Caco-2 (cell line): ENCODE measurements at regions of chr3 and their contacts with region 1.

Region 1: GRCh38 chr3:181210275-181210674 is 220.7 kb upstream of the DNAJC19 start:
- DNase-seq: no peak
- H3K4me3 ChIP-seq: no peak overlapping the region
- H3K4me3 Mint-ChIP-seq: no peak overlapping the region
- H3K27ac Mint-ChIP-seq: no peak overlapping the region
- H3K4me1 ChIP-seq: no peaks in the 10 kb centered on the region
- H3K4me1 Mint-ChIP-seq: no peaks in the 10 kb centered on the region
- H3K27me3 ChIP-seq: no peaks in the 10 kb centered on the region
- H3K27me3 Mint-ChIP-seq: peaks cover 5% of the 10 kb centered on the region
- CTCF ChIP-seq: peak in 1 of 2 experiments; percentile 38

Region 2: DNA sequence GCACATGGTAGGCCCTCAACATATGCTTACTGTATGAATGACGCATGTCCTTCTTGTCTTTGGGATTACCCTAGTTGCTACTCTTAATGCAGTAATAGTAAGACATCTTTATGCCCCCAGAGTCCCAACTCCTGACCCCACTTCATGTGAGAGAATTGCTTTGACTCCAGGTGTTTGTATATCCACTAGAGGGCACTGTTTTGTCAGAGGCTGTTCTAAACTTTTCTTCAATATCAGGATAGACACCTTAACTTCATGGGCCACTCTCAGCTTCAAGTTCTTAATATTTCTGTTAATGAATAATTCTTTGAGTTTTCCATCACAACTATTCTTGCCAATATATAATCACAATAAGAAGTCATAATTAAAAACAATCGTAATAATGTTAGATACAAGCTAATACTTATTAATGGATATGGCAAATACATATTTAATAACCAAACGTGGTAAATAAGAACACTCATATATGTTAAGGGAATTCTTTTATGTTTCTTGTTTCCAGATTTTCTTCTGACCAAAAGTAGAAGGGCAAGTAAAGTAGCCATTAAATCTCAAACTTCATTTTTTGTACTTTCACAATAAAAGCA is 116.5 kb after region 1 on chr3:
- CTCF ChIA-PET with region 1: interaction called, 7 read pairs
- POLR2A ChIA-PET with region 1: no interaction called
- intact Hi-C with region 1: loop called (anchors 1 kb)
- DNase-seq: peak in 1 of 2 experiments; percentile 32
- H3K4me3 ChIP-seq: no peak overlapping the region
- H3K4me3 Mint-ChIP-seq: no peak overlapping the region
- H3K27ac Mint-ChIP-seq: no peak overlapping the region
- H3K4me1 ChIP-seq: no peaks in the 10 kb centered on the region
- H3K4me1 Mint-ChIP-seq: no peaks in the 10 kb centered on the region
- H3K27me3 ChIP-seq: no peaks in the 10 kb centered on the region
- H3K27me3 Mint-ChIP-seq: peaks cover 31% of the 10 kb centered on the region
- CTCF ChIP-seq: peak; percentile 29 to 71

Region 3: DNA sequence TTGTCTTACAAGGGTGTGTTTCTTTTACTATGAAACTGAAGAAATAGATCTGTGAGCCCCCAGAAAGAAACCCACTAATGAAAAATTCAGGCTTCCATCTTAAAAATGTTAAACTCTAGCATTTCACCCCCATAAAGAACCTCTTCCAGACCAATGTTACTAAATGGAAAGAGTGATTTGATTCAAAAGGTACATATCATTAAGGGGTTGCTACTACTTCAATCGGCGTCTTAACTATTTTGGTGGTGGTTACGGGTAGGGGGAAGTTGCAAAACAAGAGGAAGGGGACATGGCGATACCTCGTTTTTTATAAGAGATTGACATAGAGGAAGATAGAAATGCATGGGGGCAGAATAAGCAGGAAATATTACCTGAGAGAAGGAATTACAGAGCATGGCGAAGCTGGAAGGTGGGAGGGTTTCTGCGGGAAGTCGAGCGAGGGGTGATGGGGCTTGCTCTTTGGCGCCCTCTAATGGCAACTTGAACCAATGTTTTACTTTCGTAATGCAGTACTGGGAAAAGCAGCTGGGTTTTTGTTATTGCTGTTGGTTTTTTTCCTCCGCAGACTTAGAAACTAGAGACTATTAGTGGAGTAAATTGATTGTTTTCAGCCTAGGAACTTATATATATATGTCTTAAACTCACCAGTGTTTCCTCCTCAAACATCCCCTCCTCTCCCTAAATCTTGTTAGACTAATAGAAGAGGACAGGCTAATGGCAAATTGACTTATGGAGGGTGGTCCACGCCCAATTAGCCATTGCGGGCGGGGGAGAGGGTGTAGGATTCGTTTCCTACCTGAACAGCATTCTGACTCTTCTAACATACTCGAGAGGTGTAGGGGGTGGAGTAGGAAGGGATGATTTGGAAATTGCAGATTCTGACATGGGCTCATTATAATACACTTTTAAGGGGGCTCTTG is 490.2 kb after region 1 on chr3:
- CTCF ChIA-PET with region 1: interaction called, 6 read pairs
- POLR2A ChIA-PET with region 1: no interaction called
- intact Hi-C with region 1: loop called (anchors 1 kb)
- DNase-seq: peak; percentile 63 to 79
- H3K4me3 ChIP-seq: no peak overlapping the region
- H3K4me3 Mint-ChIP-seq: peak overlapping the region; percentile 73
- H3K27ac Mint-ChIP-seq: no peak overlapping the region
- H3K4me1 ChIP-seq: no peaks in the 10 kb centered on the region
- H3K4me1 Mint-ChIP-seq: peaks cover 10% of the 10 kb centered on the region
- H3K27me3 ChIP-seq: no peaks in the 10 kb centered on the region
- H3K27me3 Mint-ChIP-seq: peaks cover 18% of the 10 kb centered on the region
- CTCF ChIP-seq: peak; percentile 71 to 84